A673 (cell line): ENCODE measurements at regions of chr3 and their contacts with region 1.

Region 1: DNA sequence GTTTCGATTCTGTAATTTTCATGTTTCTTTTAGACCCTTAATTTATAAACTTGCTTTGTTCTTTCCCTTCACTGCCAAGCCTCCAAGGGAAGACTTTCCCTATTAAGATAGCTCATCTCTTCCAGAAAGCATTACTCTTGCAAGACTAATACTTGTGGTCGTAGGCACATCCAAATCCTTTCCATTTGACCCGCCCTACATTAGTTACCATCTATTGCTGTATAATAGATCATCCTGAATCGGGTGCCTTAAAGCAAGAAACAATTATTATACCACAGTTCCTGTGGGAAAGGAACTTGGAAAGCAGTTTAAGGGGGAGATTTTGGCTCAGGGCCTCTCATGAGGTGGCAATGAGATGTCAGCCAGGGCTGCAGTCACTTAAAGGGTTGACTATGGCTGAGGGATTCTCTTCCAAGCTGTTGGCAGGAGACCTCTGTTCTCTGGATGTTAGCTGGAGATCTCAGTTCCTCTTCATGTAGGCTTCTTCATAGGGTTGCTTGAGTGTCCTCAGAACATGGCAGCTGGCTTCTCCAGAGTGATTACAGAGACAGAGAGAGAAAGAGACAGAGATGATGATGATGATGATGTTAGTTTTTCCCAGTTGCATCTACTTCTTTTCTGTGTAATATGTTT is 570.4 kb upstream of the TGFBR2 start:
- DNase-seq: peak; percentile 62
- H3K4me3 ChIP-seq: no peak overlapping the region
- H3K27ac ChIP-seq: peak overlapping the region; percentile 96
- H3K4me1 ChIP-seq: peaks cover 46% of the 10 kb centered on the region
- H3K27me3 ChIP-seq: no peaks in the 10 kb centered on the region
- CTCF ChIP-seq: no peak

Region 2: DNA sequence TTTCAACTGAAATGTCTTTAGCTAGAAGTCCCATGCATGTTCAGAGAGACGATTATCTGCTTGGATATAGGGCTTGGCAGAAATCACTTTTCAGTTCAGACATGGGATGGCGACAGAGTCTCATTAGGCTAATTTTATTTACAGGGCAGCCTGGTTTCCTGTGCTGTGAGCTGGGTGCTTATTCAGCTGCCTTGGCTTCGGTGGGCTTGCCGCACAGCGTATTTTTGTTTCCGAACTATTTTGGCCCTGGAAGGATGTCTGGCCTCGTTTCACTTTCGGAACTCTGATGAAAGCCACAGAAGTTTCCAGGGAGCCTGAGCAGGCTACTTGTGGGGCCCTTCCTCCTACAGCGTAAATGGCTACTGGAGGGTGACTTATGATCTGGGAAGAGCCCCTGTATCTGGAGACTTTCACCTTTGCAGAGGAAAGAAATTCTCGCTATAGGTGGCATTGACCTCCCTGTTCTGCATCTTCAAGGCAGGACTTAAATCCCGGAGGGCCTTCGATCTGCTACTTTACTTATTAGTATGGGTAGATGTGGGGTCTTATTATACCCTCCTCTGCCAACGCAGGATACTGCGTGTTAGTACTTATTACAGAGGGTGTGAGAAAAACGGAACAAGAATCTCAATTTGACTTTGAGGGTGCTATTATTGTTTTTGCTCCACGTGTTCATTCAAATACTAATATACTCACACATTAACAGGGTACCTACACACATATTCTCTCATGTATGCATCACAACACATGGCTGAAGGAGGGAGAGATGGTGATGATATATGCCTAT is 1119.1 kb before region 1 on chr3:
- CTCF ChIA-PET with region 1: no interaction called
- POLR2A ChIA-PET with region 1: no interaction called
- intact Hi-C with region 1: loop called (anchors 1 kb)
- DNase-seq: peak; percentile 85
- H3K4me3 ChIP-seq: peak overlapping the region; percentile 35
- H3K27ac ChIP-seq: peak overlapping the region; percentile 25
- H3K4me1 ChIP-seq: peaks cover 12% of the 10 kb centered on the region
- H3K27me3 ChIP-seq: no peaks in the 10 kb centered on the region
- CTCF ChIP-seq: peak; percentile 72

Region 3: DNA sequence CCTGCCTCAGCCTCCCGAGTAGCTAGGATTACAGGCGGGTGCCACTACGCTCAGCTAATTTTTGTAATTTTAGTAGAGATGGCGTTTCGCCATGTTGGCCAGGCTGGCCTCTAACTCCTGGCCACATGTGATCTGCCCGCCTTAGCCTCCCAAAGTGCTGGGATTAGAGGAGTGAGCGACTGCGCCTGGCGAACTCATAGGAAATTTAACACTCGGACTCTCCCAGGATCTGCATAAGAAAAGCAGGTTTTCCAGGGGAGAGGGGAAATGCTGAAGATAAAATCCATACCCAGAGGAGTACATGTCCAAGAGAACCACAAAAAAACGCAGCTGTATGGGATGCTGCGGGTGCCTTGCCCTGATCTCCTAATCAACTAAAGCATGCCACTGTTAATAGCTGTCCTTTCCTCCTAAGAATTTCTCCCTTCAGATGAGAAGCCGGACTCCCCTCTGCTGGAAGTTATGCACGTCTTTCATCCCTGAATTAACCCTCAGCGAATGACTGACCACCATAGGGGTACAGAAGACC is 545.1 kb after region 1 on chr3:
- CTCF ChIA-PET with region 1: no interaction called
- POLR2A ChIA-PET with region 1: interaction called, 18 read pairs
- intact Hi-C with region 1: no loop called
- DNase-seq: no peak
- H3K4me3 ChIP-seq: no peak overlapping the region
- H3K27ac ChIP-seq: no peak overlapping the region
- H3K4me1 ChIP-seq: no peaks in the 10 kb centered on the region
- H3K27me3 ChIP-seq: no peaks in the 10 kb centered on the region
- CTCF ChIP-seq: no peak

Region 4: GRCh38 chr3:30733209-30733608 is 697.2 kb after region 1 on chr3:
- CTCF ChIA-PET with region 1: no interaction called
- POLR2A ChIA-PET with region 1: interaction called, 5 read pairs
- intact Hi-C with region 1: loop called (anchors 1 kb)
- DNase-seq: peak; percentile 94
- H3K4me3 ChIP-seq: no peak overlapping the region
- H3K27ac ChIP-seq: peak overlapping the region; percentile 97
- H3K4me1 ChIP-seq: peaks cover 75% of the 10 kb centered on the region
- H3K27me3 ChIP-seq: no peaks in the 10 kb centered on the region
- CTCF ChIP-seq: no peak